Panc1 (cell line): ENCODE measurements at regions of chr6 and their contacts with region 1.

Region 1: DNA sequence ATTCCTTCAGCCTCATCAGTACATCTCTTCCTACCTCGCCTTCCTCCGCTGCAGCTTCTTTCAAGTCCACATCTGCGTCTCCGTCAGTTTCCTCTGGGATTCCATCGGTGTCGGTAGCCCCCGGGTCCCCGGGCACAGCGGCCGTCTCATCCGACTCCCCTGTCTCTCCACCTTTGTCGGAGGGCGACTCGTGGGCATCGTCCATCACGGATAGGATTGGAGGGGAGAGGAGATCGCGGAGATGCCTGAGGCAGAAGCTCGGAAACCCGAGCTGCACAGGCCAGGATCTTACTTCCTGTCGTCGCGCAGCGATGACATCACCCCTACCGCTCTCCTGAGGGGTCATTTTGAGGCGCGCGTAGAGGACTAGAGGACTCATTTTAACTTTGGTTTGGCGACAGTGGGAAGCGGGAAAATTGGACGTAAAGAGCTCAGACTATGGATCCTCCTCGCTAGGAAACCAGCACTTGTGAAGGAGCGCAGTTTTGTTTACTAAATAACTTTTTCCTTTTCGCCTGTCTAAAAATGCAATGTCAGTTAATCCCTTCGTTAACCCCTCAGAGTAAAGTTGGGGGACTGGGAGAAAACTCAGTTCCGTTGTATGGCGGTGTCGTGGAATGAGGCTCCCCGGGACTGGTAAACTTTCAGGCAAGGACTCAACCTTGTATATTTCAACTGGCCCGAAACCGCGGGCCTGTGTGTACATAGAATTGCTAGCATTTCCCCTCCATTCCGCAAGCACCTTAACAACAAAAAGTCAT is at the start of gene TAF11:
- DNase-seq: peak; percentile 81
- ATAC-seq: peak; percentile 95
- H3K4me3 ChIP-seq: peak within 1 kb of the TSS; percentile 95 to 99
- H3K27ac ChIP-seq: peak within 1 kb of the TSS; percentile 97
- H3K4me1 ChIP-seq: peaks cover 8% of the 10 kb centered on the region
- H3K27me3 ChIP-seq: no peaks in the 10 kb centered on the region
- CTCF ChIP-seq: no peak
- total RNA-seq, gene TAF11: 25.3 TPM

Region 2: DNA sequence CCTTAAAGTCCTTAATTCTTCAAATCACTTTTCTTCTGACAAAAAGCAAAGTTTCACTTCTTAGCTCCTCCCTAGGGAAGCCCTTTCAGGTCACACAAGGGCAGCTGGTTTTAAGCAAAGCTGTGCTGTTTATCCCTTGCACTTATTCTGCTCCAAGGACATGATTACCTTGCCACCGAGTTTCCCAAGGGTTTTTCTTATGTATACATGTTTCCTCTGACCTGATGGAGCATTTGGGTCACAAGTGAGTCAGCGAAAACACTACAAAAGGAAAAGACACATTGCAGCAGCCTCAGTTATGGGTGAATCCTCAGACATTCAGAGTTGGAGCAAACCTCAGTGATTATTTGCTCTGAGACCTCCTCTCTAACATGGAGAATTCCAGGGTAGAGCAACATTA is 164.7 kb before region 1 on chr6:
- CTCF ChIA-PET with region 1: no interaction called
- POLR2A ChIA-PET with region 1: no interaction called
- in situ Hi-C with region 1: no loop called
- intact Hi-C with region 1: no loop called
- DNase-seq: no peak
- ATAC-seq: no peak
- H3K4me3 ChIP-seq: no peak overlapping the region
- H3K27ac ChIP-seq: peak overlapping the region; percentile 32; the same call in 1 of the 2 replicates
- H3K4me1 ChIP-seq: no peaks in the 10 kb centered on the region
- H3K27me3 ChIP-seq: no peaks in the 10 kb centered on the region
- CTCF ChIP-seq: no peak

Region 3: GRCh38 chr6:34867484-34867883 is 20.4 kb before region 1 on chr6:
- CTCF ChIA-PET with region 1: no interaction called
- POLR2A ChIA-PET with region 1: interaction called, 13 read pairs
- in situ Hi-C with region 1: no loop called
- intact Hi-C with region 1: no loop called
- DNase-seq: no peak
- ATAC-seq: peak; percentile 79
- H3K4me3 ChIP-seq: no peak overlapping the region
- H3K27ac ChIP-seq: no peak overlapping the region
- H3K4me1 ChIP-seq: no peaks in the 10 kb centered on the region
- H3K27me3 ChIP-seq: no peaks in the 10 kb centered on the region
- CTCF ChIP-seq: peak; percentile 30; the same call in 1 of the 2 replicates

Region 4: GRCh38 chr6:34953061-34954025 is 65.4 kb after region 1 on chr6:
- CTCF ChIA-PET with region 1: no interaction called
- POLR2A ChIA-PET with region 1: no interaction called
- in situ Hi-C with region 1: no loop called
- intact Hi-C with region 1: no loop called
- DNase-seq: peak; percentile 84
- ATAC-seq: peak; percentile 98
- H3K4me3 ChIP-seq: no peak overlapping the region
- H3K27ac ChIP-seq: peak overlapping the region; percentile 69
- H3K4me1 ChIP-seq: peaks cover 22% of the 10 kb centered on the region
- H3K27me3 ChIP-seq: no peaks in the 10 kb centered on the region
- CTCF ChIP-seq: no peak